ENCODE measurements at regions of chr14 and their contacts with region 1.

Region 1: GRCh38 chr14:49971156-49972130 is 78.6 kb downstream of the ARF6 start:
- DNase-seq: peak in 8 of 9 donors; percentile 59 to 94 (median 90)
- ATAC-seq: peak; percentile 92
- H3K4me3 ChIP-seq: peak overlapping the region; percentile 40
- H3K4me3 Mint-ChIP-seq: peak overlapping the region; percentile 75 to 96 (median 86)
- H3K27ac ChIP-seq: peak overlapping the region; percentile 74
- H3K27ac Mint-ChIP-seq: peak overlapping the region; percentile 96 to 99 (median 99)
- H3K4me1 ChIP-seq: peaks cover 35 to 49% of the 10 kb centered on the region in 2 donors
- H3K4me1 Mint-ChIP-seq: peaks cover 32 to 88% (median 63%) of the 10 kb centered on the region in 7 donors
- H3K27me3 ChIP-seq: no peaks in the 10 kb centered on the region
- H3K27me3 Mint-ChIP-seq: no peaks in the 10 kb centered on the region

Region 2: DNA sequence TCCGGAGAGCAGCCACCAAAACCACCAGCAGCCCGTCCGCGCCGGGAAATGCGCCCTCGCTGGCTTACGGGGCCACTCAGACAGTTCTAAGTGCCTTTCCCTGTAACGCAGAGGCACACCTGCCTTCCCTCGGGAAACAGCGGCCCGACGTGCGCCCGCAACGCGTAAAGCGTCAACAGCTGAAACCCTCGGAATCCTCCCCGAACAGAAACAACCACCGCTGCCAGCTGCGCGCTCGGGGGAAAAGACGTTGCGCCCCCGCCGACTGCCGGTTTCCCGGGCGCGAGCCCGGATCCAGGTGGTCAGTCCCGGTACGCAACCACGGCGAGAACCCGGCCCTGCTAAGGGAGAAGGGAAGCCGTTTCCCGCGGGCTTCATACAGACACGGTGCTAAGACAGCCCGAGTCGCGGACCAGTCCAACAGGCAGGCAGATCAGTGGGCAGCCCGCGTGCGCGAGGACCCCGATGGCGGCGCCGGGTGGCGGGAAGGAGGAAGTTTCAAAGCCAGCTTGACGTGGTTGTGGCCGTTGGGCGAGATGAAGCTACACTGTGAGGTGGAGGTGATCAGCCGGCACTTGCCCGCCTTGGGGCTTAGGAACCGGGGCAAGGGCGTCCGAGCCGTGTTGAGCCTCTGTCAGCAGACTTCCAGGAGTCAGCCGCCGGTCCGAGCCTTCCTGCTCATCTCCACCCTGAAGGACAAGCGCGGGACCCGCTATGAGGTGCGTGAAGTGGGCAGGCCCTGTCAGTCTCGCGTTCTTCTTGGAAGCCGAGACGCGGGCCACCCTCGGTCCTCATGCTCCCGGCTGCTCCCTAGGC is 372.8 kb before region 1 on chr14 and contains the start of gene LRR1:
- CTCF ChIA-PET with region 1: no interaction called
- POLR2A ChIA-PET with region 1: no interaction called
- intact Hi-C with region 1: no loop called
- DNase-seq: peak; percentile 74 to 91 (median 84)
- ATAC-seq: peak; percentile 93
- H3K4me3 ChIP-seq: peak within 1 kb of the TSS; percentile 94
- H3K4me3 Mint-ChIP-seq: peak within 1 kb of the TSS; percentile 91 to 100 (median 98)
- H3K27ac ChIP-seq: peak within 1 kb of the TSS; percentile 92
- H3K27ac Mint-ChIP-seq: peak within 1 kb of the TSS; percentile 95 to 99 (median 98)
- H3K4me1 ChIP-seq: peaks cover 0 to 5% of the 10 kb centered on the region in 2 donors
- H3K4me1 Mint-ChIP-seq: peaks cover 5 to 46% (median 37%) of the 10 kb centered on the region in 7 donors
- H3K27me3 ChIP-seq: no peaks in the 10 kb centered on the region
- H3K27me3 Mint-ChIP-seq: no peaks in the 10 kb centered on the region
- total RNA-seq, gene LRR1: 7.5 to 39.7 (median 13.3) TPM

Region 3: DNA sequence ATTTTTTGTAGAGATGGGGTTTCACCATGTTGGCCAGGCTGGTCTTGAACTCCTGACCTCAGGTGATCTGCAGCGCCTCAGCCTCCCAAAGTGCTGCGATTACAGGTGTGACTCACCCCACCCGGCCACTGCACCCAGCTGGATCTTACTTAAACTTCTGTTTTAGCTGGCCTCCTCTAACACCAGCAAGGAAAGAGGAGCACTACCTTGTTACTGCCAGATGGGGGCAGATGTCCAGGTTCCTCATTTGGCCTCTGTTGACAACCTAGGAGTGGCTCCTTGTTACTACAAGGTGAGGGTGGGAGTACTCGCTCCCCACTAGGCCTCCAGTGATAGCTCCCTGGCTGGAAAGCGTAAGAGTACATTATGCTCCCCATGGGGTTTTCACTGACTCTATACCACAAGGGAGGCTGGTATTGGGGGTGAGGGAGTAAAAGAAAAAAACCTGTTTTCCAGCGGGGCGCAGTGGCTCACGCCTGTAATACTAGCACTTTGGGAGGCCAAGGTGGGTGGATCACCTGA is 91.7 kb before region 1 on chr14:
- CTCF ChIA-PET with region 1: interaction called, 4 read pairs
- POLR2A ChIA-PET with region 1: interaction called, 12 read pairs
- intact Hi-C with region 1: no loop called
- DNase-seq: peak in 8 of 9 donors; percentile 32 to 64 (median 48)
- ATAC-seq: peak; percentile 92
- H3K4me3 ChIP-seq: no peak overlapping the region
- H3K4me3 Mint-ChIP-seq: no peak overlapping the region
- H3K27ac ChIP-seq: no peak overlapping the region
- H3K27ac Mint-ChIP-seq: peak overlapping the region in 6 of 9 donors; percentile 17 to 74 (median 44)
- H3K4me1 ChIP-seq: peaks cover 0 to 6% of the 10 kb centered on the region in 2 donors
- H3K4me1 Mint-ChIP-seq: peaks cover 10 to 30% (median 12%) of the 10 kb centered on the region in 7 donors
- H3K27me3 ChIP-seq: no peaks in the 10 kb centered on the region
- H3K27me3 Mint-ChIP-seq: peaks cover 0 to 3% (median 0%) of the 10 kb centered on the region in 5 donors

Region 4: GRCh38 chr14:49946320-49947141 is 24.9 kb before region 1 on chr14:
- CTCF ChIA-PET with region 1: interaction called, 15 read pairs
- POLR2A ChIA-PET with region 1: interaction called, 214 read pairs
- intact Hi-C with region 1: loop called (anchors 1 kb)
- DNase-seq: peak in 7 of 9 donors; percentile 30 to 55 (median 43)
- ATAC-seq: peak; percentile 71
- H3K4me3 ChIP-seq: peak overlapping the region; percentile 36
- H3K4me3 Mint-ChIP-seq: peak overlapping the region; percentile 43 to 81 (median 74)
- H3K27ac ChIP-seq: peak overlapping the region; percentile 66
- H3K27ac Mint-ChIP-seq: peak overlapping the region; percentile 82 to 98 (median 94)
- H3K4me1 ChIP-seq: peaks cover 28 to 46% of the 10 kb centered on the region in 2 donors
- H3K4me1 Mint-ChIP-seq: peaks cover 26 to 86% (median 77%) of the 10 kb centered on the region in 7 donors
- H3K27me3 ChIP-seq: no peaks in the 10 kb centered on the region
- H3K27me3 Mint-ChIP-seq: no peaks in the 10 kb centered on the region

Region 5: DNA sequence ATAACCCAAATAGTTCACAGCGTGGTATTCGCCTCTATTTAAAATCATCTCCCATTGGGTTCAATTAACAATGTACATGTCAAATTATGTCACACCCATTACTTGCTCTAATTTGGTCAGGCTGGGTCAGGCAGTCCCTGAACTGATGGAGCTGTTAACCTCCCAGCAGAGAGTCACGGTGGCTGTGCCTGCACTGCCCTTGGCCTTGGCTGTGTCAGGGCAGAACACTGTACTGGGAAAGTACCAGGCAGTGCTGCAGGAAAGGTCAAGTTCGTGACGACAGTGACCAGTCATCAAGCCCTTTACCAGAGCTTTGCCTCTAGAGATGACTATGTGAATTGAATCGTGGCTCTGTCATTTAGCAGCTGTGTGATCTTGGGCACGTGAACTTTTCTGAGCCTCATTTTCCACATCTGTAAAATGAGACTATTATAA is 21.5 kb after region 1 on chr14:
- CTCF ChIA-PET with region 1: interaction called, 3 read pairs
- POLR2A ChIA-PET with region 1: interaction called, 17 read pairs
- intact Hi-C with region 1: no loop called
- DNase-seq: peak in 1 of 9 donors; percentile 41
- ATAC-seq: peak; percentile 18
- H3K4me3 ChIP-seq: no peak overlapping the region
- H3K4me3 Mint-ChIP-seq: no peak overlapping the region
- H3K27ac ChIP-seq: no peak overlapping the region
- H3K27ac Mint-ChIP-seq: peak overlapping the region in 2 of 9 donors; percentile 21 to 78
- H3K4me1 ChIP-seq: peaks cover 1 to 4% of the 10 kb centered on the region in 2 donors
- H3K4me1 Mint-ChIP-seq: peaks cover 10 to 56% (median 18%) of the 10 kb centered on the region in 7 donors
- H3K27me3 ChIP-seq: no peaks in the 10 kb centered on the region
- H3K27me3 Mint-ChIP-seq: no peaks in the 10 kb centered on the region

Region 6: DNA sequence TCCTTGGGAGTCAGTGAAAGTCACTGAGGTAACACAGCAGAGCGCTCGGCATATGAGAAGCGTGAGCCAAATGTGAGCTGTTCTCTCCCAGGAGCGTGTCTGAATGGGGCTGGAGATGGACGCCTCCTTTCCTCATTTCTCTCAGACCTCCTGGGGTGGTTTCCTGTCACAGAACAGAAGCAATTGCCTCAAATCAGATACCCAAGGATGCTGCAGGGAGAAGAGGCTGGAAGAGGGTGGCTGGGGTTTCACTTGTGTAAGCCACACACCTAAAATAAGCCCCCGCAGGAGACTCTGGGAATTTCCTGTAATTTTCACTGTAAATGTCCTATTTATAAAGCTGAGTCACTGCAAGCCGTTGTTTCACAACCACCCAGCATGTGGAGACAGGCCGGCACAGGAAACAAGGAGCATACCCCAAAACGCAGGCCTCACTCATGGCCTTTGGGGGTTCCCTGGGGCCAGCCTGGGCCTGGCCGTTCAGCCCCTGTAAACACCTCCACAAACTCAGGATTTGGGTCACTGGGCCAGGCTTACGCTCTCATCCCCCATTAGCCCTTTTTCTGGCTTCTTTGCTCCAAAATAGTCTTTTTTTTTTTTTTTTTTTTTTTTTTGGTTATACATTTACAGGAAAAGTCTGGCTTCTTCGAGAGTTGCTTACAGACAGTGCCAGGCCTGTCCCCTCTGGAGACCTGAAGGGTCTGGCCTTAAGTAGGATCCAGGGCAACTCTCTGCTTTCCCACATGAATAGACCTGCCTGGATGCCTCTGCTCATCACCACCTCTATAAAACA is 89.6 kb after region 1 on chr14:
- CTCF ChIA-PET with region 1: interaction called, 8 read pairs
- POLR2A ChIA-PET with region 1: interaction called, 35 read pairs
- intact Hi-C with region 1: loop called (anchors 1 kb)
- DNase-seq: peak in 2 of 9 donors; percentile 27 to 61
- ATAC-seq: no peak
- H3K4me3 ChIP-seq: peak overlapping the region; percentile 53
- H3K4me3 Mint-ChIP-seq: peak overlapping the region; percentile 74 to 94 (median 89)
- H3K27ac ChIP-seq: peak overlapping the region; percentile 79
- H3K27ac Mint-ChIP-seq: peak overlapping the region; percentile 96 to 100 (median 99)
- H3K4me1 ChIP-seq: peaks cover 61 to 69% of the 10 kb centered on the region in 2 donors
- H3K4me1 Mint-ChIP-seq: peaks cover 70 to 93% (median 89%) of the 10 kb centered on the region in 7 donors
- H3K27me3 ChIP-seq: no peaks in the 10 kb centered on the region
- H3K27me3 Mint-ChIP-seq: no peaks in the 10 kb centered on the region

Region 7: GRCh38 chr14:50109342-50109741 is 137.9 kb after region 1 on chr14:
- CTCF ChIA-PET with region 1: interaction called, 5 read pairs
- POLR2A ChIA-PET with region 1: interaction called, 4 read pairs
- intact Hi-C with region 1: loop called in 1 of 2 experiments (anchors 1 kb)
- DNase-seq: no peak
- ATAC-seq: no peak
- H3K4me3 ChIP-seq: no peak overlapping the region
- H3K4me3 Mint-ChIP-seq: no peak overlapping the region
- H3K27ac ChIP-seq: no peak overlapping the region
- H3K27ac Mint-ChIP-seq: no peak overlapping the region
- H3K4me1 ChIP-seq: peaks cover under 1 to 4% of the 10 kb centered on the region in 2 donors
- H3K4me1 Mint-ChIP-seq: peaks cover 0 to 21% (median 16%) of the 10 kb centered on the region in 7 donors
- H3K27me3 ChIP-seq: no peaks in the 10 kb centered on the region
- H3K27me3 Mint-ChIP-seq: no peaks in the 10 kb centered on the region

Measured in naive thymus-derived CD4-positive, alpha-beta T cell (primary cell).